Activated CD4-positive, alpha-beta T cell treated with anti-CD3 and anti-CD28 coated beads, Interleukin-2, amount 10 ng/mL, durations not matched to agents 24 days and 14 days (primary cell): ENCODE measurements at regions of chr5 and their contacts with region 1.

Region 1: DNA sequence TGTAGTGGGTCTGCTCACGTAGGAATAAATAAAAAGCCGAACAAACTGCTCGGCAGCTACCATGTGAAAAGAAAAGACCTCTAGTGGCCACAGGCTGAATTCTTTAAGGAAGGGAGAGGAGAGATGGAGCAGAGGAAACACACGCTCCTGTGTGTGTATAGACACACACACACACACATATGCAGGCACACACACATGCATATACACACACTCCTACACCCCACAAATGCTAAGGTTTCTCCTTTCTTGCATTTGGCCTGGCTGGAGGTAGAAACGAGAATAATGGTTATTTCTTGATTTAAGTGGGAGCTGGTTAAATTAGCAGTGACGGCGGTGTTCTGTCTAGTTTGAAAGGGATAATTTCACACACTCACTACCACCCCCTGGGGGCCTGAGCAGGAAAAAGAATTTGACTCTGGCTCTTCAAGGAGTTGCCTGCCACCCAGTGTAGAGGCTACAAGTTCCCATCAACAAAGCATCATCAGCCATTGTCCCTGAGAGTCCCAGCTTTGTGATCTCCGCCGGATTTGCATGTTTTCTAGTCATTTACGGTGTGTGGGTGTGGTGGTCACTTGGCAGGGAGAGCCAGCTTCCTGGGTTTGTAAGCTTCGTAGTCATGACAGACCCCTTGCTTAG is at the start of gene INSYN2B:
- DNase-seq: peak; percentile 62
- H3K4me3 Mint-ChIP-seq: no peak within 1 kb of the TSS
- H3K27ac Mint-ChIP-seq: no peak within 1 kb of the TSS
- H3K4me1 Mint-ChIP-seq: no peaks in the 10 kb centered on the region
- H3K27me3 Mint-ChIP-seq: no peaks in the 10 kb centered on the region
- total RNA-seq, gene INSYN2B: not detected in 2 replicates

Region 2: DNA sequence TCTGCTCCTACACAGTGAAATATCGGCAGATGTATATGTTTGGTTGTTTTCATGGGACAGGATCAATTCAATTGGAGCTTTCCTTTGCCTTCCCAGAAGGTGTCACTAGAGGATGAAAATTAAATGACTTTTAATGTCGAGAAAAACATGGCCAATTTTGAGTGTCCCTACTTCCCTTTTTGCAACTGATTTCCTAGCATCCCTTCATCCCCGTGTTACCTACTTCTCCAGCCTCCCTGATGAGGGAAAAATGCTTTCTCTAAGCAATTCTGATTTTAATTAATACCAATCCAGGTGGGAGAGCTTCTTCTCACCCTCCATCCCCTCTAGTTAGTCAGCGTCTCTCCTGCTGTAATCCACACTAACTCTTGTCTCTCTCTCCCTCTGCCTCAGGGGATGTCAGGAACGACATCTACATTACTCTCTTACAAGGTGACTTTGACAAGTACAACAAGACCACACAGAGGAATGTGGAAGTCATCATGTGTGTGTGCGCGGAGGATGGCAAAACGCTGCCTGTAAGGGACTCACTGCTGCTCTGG is 278.6 kb before region 1 on chr5:
- intact Hi-C with region 1: loop called (anchors 10 kb)
- DNase-seq: no peak
- H3K4me3 Mint-ChIP-seq: no peak overlapping the region
- H3K27ac Mint-ChIP-seq: peak overlapping the region; percentile 51
- H3K4me1 Mint-ChIP-seq: peaks cover 26% of the 10 kb centered on the region
- H3K27me3 Mint-ChIP-seq: no peaks in the 10 kb centered on the region